WTC11 (cell line): ENCODE measurements at regions of chr16 and their contacts with region 1.

Region 1: DNA sequence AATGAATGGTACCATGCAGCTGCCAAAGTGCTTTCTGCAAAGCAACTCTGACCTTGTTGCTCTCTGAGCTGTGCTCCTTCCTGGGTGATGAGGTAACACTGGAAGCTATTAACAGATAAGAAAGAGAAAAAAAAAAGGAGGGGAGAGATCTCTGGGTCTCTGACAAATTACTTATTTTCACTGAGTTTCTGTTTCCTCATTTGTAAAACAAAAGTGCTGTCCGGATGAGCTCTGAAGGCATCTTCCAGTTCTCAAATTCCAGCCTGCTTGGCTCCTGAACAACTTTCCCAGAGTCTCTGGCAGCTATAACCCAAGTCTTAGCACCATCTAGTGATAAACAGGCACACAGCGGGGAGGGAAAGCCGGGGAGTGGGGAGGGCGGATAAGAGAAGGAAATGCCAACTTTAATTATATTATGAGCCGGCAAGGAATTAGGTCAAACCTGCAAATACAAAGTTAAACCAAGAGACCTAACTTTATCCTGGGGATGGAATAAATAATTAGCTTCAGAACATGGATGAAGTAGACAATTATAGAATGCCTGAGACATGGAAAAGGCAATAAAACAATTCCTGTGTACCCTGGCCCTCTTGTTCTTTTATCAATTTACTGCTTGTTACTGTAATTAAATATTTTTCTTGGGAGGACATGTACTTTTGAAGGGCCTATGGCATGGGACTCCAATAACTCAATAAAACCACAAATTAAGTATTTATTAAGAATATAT is 61.3 kb upstream of the KIFC3 start:
- DNase-seq: peak; percentile 64
- ATAC-seq: peak; percentile 89
- H3K4me3 Mint-ChIP-seq: peak overlapping the region; percentile 24
- H3K27ac Mint-ChIP-seq: peak overlapping the region; percentile 88
- H3K4me1 Mint-ChIP-seq: peaks cover 45% of the 10 kb centered on the region
- H3K27me3 Mint-ChIP-seq: no peaks in the 10 kb centered on the region
- CTCF ChIP-seq: no peak

Region 2: DNA sequence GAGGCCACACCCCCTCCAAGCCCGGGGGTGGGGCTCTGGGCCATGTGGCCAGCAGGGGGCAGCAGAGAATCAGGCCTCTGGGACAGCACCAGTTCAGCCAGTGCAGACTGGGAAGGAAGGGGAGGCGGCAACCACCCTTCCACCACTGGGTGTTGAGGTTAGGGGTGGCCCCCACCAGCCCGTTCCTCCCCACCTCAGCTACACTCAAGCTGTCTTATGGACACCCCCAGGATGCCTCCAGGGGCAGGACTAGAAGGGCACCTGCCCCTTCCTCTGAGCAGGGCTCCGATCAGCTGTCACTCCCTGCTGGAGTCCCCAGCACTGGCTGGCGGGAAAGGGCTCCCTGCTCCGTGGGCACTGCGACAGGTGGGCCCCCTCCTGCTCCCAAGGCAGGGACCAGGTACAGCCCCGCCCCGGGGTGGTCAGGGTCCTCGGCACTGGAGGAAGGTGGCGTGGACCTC is 106.2 kb before region 1 on chr16:
- CTCF ChIA-PET with region 1: interaction called, 11 read pairs
- POLR2A ChIA-PET with region 1: no interaction called
- DNase-seq: peak; percentile 94
- ATAC-seq: peak; percentile 90
- H3K4me3 Mint-ChIP-seq: no peak overlapping the region
- H3K27ac Mint-ChIP-seq: no peak overlapping the region
- H3K4me1 Mint-ChIP-seq: peaks cover 12% of the 10 kb centered on the region
- H3K27me3 Mint-ChIP-seq: no peaks in the 10 kb centered on the region
- CTCF ChIP-seq: peak; percentile 90

Region 3: DNA sequence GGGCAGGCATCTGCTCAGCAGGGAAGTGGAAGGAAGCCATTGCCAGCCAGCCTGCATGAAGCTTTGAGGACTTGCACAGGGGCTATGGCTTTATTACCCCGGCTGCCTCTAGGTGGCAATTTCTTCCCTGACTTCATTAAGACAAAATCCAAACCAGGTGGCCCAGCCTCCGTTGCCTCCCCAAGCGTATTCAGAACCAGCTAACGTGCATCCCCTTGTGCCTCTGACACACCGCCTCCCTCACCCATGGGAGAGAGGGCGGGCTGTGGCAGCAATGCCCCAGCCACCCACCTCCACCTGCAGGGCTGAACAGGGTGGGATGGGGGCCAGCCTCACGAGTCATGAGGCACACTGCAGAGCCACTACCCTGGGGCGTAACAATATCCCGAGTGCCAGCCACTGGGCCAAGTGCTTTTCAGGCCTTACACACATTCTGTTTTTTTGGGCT is 68.1 kb before region 1 on chr16:
- CTCF ChIA-PET with region 1: interaction called, 28 read pairs
- POLR2A ChIA-PET with region 1: interaction called, 3 read pairs
- DNase-seq: peak; percentile 74
- ATAC-seq: peak; percentile 68
- H3K4me3 Mint-ChIP-seq: no peak overlapping the region
- H3K27ac Mint-ChIP-seq: 0 out of 2 replicates have a peak overlapping the region, but pooled peaks have one; percentile 57
- H3K4me1 Mint-ChIP-seq: peaks cover 40% of the 10 kb centered on the region
- H3K27me3 Mint-ChIP-seq: peaks cover 18% of the 10 kb centered on the region
- CTCF ChIP-seq: peak; percentile 21; the same call in 1 of the 2 replicates

Region 4: DNA sequence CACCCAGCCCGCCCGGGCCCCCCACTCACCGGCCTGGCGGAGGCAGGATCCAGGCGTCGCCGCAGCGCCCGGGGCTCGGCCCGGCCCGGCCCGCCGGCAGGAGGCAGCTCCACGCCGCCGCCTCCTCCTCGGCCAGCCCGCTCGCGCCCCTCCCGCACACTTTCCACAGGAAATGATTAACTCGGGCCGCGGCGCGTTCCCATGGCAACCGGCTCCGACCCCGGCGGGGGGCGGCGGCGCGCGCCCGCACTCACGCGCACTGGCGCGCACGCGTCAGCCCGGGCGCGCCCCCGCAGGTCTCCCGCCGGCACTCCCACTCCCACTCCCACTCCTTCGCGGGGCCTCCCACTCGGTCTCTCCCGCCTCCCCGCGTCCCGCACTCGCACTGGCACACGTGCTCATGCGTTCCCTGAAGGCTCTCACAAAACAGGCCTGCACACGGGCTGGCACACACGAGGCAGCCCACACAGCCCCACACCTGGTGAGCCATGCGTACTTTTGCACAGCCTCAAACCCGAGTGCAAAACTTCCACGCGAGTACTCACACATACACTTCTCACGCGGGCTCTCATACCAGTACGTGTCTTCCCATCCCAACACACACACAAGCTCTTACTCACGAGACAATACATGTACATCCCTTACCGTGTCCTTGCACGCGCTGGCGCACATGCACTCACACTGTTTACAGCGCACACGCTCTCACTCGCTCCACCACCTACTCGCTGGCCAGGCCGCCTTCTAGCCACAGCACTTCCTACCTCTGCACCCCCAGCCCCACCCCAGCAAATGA is 61.1 kb before region 1 on chr16 and contains the start of gene KIFC3:
- CTCF ChIA-PET with region 1: interaction called, 15 read pairs
- POLR2A ChIA-PET with region 1: no interaction called
- DNase-seq: peak; percentile 61
- ATAC-seq: no peak; the same call in 1 of the 2 replicates
- H3K4me3 Mint-ChIP-seq: peak within 1 kb of the TSS; percentile 91
- H3K27ac Mint-ChIP-seq: peak within 1 kb of the TSS; percentile 66
- H3K4me1 Mint-ChIP-seq: peaks cover 62% of the 10 kb centered on the region
- H3K27me3 Mint-ChIP-seq: peaks cover 29% of the 10 kb centered on the region
- CTCF ChIP-seq: no peak
- total RNA-seq, gene KIFC3: 9.2 to 11.6 TPM (median 10.0 TPM) in 3 replicates

Region 5: DNA sequence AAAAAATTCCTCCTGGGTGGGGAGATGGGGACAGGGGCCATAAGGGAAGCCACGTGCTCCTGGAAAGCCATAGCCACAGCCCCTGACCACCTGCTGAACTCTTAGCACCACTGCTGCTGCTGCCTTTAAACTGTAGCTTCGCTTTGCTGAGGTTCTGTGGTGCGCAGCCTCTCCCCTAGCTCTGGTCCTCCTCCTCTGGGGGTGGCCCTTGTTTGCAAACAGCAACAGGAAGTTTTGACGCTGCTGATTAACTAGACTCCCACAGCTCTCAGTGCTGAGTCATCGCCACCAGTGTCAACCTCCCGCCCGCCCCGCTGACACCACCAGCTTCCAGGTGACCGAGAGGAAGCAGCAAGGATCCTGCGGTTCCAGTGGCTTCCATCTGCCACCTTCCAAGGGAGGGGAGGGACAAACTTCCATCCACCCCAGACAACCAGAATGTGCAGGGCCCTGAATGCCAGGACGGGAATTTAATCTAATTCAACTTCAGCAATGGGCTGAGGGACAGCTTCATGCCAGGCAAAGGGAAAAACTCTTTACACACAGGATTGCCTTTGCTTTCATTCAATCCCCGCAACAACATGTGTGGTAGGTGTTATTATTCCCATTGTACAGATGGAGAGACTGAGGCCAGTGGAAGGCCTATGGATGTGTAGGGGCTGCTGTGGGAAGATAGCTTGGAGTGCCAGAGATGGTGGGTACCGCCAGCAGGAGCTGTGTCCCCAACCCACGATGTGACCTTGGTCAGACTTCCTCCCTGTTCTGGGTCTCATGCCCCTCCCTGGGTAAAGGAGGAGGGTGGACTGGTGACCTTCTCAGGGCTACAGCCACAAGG is 53.2 kb before region 1 on chr16:
- CTCF ChIA-PET with region 1: interaction called, 11 read pairs
- POLR2A ChIA-PET with region 1: no interaction called
- DNase-seq: peak; percentile 47
- ATAC-seq: peak; percentile 59
- H3K4me3 Mint-ChIP-seq: no peak overlapping the region
- H3K27ac Mint-ChIP-seq: peak overlapping the region; percentile 87
- H3K4me1 Mint-ChIP-seq: peaks cover 57% of the 10 kb centered on the region
- H3K27me3 Mint-ChIP-seq: peaks cover 2% of the 10 kb centered on the region; the same call in 1 of the 2 replicates
- CTCF ChIP-seq: no peak

Region 6: DNA sequence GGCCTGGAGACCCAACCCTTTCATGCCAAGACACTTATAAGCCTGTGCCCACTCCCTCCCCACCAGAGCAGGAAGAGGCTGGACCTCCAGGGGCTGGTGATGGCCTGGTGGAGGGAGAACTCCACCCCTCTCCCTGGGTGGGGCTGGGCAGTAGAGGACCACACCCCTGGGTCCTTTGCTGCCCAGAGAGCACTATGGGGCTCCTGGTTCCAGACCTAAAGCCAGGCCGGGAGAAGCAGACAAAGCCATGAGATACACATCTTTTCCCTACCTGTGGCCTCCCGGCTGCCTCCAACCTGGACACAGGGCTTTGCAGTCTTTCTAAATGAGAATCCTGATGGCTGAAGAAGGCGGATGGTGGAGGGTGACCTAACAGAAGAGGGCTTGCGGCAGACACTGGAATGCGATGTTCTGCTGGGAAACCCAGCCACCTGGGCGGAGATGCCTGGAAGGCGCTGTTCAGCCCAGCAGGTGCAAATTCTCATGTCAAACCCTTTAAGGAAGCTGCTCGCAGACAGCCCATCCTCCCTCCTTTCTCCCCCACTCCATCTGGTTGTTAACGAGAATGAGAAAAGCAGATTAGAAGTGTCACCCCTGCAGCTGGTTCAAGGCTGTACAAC is 17.4 kb before region 1 on chr16:
- CTCF ChIA-PET with region 1: interaction called, 12 read pairs
- POLR2A ChIA-PET with region 1: interaction called, 4 read pairs
- DNase-seq: peak; percentile 82
- ATAC-seq: peak; percentile 91
- H3K4me3 Mint-ChIP-seq: peak overlapping the region; percentile 57
- H3K27ac Mint-ChIP-seq: peak overlapping the region; percentile 97
- H3K4me1 Mint-ChIP-seq: peaks cover 52% of the 10 kb centered on the region
- H3K27me3 Mint-ChIP-seq: no peaks in the 10 kb centered on the region; the same call in 1 of the 2 replicates
- CTCF ChIP-seq: no peak

Region 7: GRCh38 chr16:57882792-57883191 is 19.2 kb after region 1 on chr16:
- CTCF ChIA-PET with region 1: interaction called, 10 read pairs
- POLR2A ChIA-PET with region 1: interaction called, 4 read pairs
- DNase-seq: no peak
- ATAC-seq: no peak
- H3K4me3 Mint-ChIP-seq: no peak overlapping the region
- H3K27ac Mint-ChIP-seq: no peak overlapping the region
- H3K4me1 Mint-ChIP-seq: peaks cover 23% of the 10 kb centered on the region
- H3K27me3 Mint-ChIP-seq: peaks cover 27% of the 10 kb centered on the region
- CTCF ChIP-seq: no peak